Activated CD4-positive, alpha-beta T cell treated with anti-CD3 and anti-CD28 coated beads, Interleukin-2, amount 10 ng/mL, durations not matched to agents 24 days and 14 days (primary cell): ENCODE measurements at regions of chr3 and their contacts with region 1.

Region 1: DNA sequence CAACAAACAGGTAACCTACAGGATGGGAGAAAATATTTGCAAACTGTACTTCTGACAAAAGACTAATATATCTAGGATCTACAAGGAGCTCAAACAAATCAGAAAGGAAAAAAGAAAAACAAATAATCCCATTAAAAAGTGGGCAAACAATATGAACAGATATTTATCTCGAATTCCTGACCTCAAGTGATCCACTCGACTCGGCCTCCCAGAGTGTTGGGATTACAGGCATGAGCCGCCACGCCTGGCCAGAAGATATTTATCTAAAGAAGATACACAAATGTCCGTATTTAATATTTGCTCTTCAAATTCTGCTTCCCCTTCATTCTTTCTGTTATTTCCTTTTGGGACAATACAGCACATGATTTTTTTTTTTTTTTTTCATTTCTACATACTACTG is 151.8 kb upstream of the GRM7 start:
- DNase-seq: no peak
- H3K4me3 Mint-ChIP-seq: no peak overlapping the region
- H3K27ac Mint-ChIP-seq: no peak overlapping the region
- H3K4me1 Mint-ChIP-seq: no peaks in the 10 kb centered on the region
- H3K27me3 Mint-ChIP-seq: no peaks in the 10 kb centered on the region

Region 2: DNA sequence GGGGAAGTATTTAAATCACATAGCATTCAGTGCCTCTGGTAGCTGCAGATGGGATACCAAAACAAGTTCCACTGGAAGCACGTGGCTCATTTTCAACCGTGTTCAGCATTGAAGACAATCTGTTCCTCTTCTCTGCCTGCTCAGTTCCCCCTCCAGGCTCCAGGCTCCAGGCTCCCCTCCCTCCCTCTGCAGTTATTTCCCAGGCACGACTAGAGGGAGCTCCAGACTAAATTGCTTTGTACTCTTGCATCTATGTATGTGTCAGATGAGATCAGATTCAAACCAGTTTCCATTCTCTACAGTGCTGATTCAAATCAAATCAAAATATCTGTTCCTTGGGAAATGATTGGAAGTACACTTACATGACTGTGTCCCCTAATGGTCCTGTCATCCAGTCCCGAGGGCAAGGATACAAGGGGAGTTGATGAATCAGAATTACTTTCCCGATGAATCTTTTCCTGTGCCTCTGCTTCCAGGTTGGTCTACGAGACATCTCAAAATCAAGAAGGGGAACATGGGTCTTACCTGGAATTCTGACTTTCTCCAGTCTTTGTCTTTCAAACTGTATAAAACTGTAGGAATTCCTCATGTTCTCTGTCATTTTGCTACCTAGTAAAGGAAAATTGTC is 921.2 kb before region 1 on chr3:
- intact Hi-C with region 1: no loop called
- DNase-seq: no peak
- H3K4me3 Mint-ChIP-seq: no peak overlapping the region
- H3K27ac Mint-ChIP-seq: no peak overlapping the region
- H3K4me1 Mint-ChIP-seq: no peaks in the 10 kb centered on the region
- H3K27me3 Mint-ChIP-seq: no peaks in the 10 kb centered on the region

Region 3: GRCh38 chr3:6491768-6492167 is 217.4 kb before region 1 on chr3:
- intact Hi-C with region 1: loop called (anchors 10 kb)
- DNase-seq: no peak
- H3K4me3 Mint-ChIP-seq: no peak overlapping the region
- H3K27ac Mint-ChIP-seq: no peak overlapping the region
- H3K4me1 Mint-ChIP-seq: no peaks in the 10 kb centered on the region
- H3K27me3 Mint-ChIP-seq: no peaks in the 10 kb centered on the region

Region 4: DNA sequence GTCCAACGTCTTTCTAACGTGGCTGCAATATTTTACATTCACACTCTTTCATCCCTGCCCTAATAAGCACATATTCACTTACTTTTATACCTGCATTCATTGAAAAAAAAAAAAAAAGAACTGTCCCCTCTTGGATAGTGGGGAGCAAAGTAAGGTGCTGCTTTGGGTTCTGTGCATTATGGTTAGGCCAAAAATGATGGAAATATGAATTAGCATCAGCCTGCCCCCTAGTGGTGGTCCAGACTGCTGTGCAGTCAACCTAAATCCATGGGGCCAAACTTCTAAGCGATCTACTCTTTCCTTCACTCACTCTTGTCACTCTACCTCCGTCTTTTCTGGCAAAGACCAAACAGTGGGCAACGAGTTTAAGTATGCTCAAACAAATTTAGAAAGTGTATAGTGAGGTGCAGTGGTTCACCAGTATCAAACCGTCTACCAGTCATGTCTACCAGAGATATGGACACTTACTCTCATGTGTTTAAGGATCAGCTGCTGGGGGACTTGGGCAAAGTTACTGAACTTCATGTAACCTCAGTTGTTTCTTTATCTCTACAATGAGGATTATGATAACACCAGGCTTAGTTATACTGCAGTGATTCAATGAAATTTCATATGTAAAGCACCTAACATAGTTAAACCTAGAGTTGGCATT is 90.2 kb after region 1 on chr3:
- intact Hi-C with region 1: no loop called
- DNase-seq: peak; percentile 74
- H3K4me3 Mint-ChIP-seq: no peak overlapping the region
- H3K27ac Mint-ChIP-seq: no peak overlapping the region
- H3K4me1 Mint-ChIP-seq: no peaks in the 10 kb centered on the region
- H3K27me3 Mint-ChIP-seq: no peaks in the 10 kb centered on the region